Activated CD4-positive, alpha-beta memory T cell treated with anti-CD3 and anti-CD28 coated beads, Interleukin-2, amount 10 ng/mL, durations not matched to agents 7 days and 5 days (primary cell): ENCODE measurements at regions of chr2 and their contacts with region 1.

Region 1: GRCh38 chr2:97870396-97870843 is 125.3 kb downstream of the TMEM131 start:
- DNase-seq: peak; percentile 79
- H3K4me3 Mint-ChIP-seq: no peak overlapping the region
- H3K27ac Mint-ChIP-seq: peak overlapping the region; percentile 67
- H3K4me1 Mint-ChIP-seq: peaks cover 36% of the 10 kb centered on the region
- H3K27me3 Mint-ChIP-seq: no peaks in the 10 kb centered on the region

Region 2: DNA sequence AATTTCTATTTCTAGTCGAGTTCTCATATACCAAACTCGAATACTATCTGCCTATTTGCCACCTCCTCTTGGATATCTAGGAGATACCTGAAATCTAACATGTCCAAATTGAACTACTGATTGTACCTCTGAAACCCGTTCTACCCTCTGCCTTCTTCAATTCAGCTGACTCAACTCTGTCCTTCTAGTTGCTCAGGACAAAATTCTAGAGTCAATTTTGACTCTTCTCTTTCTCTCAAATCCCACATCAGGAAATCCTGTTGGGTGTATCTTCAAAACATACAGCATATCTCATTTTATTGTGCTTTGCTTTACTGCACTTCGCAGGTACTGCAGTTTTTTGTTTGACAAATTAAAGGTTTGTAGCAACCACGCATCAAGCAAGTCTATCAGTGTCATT is 19.2 kb before region 1 on chr2:
- CTCF ChIA-PET with region 1: no interaction called
- POLR2A ChIA-PET with region 1: interaction called, 23 read pairs
- DNase-seq: no peak
- H3K4me3 Mint-ChIP-seq: peak overlapping the region; percentile 1
- H3K27ac Mint-ChIP-seq: peak overlapping the region; percentile 58
- H3K4me1 Mint-ChIP-seq: peaks cover 50% of the 10 kb centered on the region
- H3K27me3 Mint-ChIP-seq: no peaks in the 10 kb centered on the region